GM13977 (cell line): ENCODE measurements at regions of chr6 and their contacts with region 1.

Region 1: GRCh38 chr6:38012573-38012972 is 193.0 kb downstream of the ZFAND3 start:
- DNase-seq: peak; percentile 47
- CTCF ChIP-seq: peak; percentile 85

Region 2: DNA sequence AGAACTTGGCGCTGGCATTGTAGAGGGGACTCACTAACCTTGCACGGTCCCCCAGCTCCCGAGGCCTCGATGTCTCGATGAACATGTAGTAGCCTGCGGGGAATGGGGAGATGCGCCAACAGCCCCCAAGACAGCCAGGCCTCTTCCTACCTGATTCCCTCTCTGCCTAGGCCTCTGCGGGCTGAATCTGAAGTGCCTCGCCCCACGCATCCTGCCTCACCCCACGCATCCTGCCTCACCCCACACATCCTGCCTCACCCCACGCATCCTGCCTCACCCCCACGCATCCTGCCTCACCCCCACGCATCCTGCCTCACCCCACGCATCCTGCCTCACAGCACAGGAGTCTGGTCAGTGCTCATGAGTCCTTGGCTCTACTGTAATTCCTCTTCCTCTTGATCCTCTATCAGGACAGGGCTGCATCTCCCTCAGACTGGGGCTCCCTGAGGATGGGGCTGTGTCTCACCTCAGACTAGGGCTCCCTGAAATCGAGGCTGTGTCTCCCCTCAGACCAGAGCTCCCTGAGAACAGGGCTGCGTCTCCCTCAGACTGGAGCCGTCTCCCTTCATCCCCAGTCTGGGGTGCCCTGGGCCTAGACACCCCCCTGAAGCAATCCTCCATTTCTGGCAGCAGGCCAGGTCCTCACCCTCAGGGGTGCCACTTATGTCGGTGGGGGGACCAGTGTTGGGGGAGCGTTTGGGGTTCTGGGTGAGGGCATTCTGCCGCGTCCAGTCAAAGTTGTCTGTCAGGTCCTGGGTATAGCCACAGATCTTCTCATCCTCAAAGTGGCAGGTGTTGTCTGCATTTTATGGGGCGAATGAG is 368.5 kb before region 1 on chr6:
- in situ Hi-C with region 1: no loop called
- DNase-seq: no peak
- CTCF ChIP-seq: no peak

Region 3: DNA sequence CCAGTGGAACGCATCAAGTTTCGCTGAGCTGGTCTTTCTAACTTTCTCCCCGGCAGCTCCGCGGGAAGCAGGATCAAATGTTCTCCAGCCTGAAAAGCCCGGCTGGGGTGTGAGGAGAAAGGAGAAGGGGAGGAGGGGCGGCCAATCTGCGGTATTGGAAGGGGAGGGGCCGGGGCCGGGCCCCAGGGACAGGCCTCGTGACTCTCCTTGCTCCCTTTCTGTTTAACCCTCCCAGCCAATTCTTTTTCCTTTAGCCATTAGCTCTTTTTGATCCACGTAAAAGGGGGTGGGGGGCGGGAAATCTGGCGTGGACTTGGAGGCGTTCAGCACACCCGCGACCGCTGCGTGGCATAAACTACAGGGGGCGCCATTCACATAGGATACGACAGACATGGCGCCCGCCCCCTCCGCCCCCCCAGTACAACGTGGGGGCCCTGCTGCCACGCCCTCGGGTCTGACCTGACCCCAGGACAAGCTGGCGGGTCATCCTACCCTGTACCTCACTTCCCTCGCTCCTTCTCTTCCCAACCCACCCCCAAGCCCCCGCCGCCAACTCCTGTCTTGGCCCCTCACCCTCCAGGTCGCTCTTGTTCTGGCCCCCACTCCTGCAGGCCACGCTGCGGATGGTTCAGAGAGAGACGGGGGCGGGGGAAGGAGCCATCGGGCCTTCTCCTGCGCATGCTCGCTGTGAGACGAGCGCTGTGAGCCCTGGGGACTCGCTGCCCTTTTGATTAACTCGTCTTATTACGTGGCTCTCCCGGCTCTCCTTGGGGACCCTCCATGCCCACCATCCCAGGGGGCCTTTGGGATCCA is 307.1 kb before region 1 on chr6:
- in situ Hi-C with region 1: loop called (anchors 10 kb)
- DNase-seq: peak; percentile 90
- CTCF ChIP-seq: peak; percentile 86

Region 4: DNA sequence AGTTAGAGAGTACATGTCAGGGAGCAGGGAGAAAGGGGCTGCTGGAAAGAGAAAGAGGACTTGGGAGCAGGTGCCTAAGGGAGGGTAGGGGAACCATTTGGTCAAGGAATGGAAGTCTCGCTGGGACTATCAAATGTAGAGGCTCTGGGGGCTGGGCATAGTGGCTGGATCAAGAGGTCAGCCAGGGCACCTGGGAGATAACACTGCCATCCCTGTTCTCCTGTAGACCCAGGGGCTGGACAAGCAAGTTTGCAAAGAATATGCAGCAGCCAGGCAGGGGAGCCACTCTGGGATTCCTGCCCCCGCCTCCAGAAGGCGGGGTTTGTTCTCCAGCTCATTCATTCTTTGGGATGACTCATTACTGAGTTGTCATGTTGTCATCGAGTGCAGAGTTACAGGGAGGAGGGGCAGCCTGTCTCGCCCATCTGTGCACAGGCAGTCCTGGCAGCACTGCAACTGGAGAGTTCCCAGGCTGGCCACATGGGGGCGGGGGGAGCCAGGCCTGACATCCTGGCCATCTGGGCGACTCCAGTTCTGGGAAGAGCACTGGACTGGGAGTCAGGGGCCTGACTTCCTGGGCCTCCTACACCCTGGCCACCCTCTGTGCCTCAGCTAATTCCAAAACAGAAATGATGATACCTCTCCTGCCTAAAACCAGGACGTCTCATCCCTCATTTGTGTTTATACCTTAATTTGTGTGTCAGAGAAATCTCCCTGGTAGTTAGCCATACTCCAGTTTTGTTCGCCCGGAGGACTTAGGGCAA is 221.2 kb before region 1 on chr6:
- in situ Hi-C with region 1: loop called (anchors 10 kb)
- DNase-seq: peak; percentile 85
- CTCF ChIP-seq: peak; percentile 91